ENCODE measurements at regions of chr6 and their contacts with region 1.

Region 1: DNA sequence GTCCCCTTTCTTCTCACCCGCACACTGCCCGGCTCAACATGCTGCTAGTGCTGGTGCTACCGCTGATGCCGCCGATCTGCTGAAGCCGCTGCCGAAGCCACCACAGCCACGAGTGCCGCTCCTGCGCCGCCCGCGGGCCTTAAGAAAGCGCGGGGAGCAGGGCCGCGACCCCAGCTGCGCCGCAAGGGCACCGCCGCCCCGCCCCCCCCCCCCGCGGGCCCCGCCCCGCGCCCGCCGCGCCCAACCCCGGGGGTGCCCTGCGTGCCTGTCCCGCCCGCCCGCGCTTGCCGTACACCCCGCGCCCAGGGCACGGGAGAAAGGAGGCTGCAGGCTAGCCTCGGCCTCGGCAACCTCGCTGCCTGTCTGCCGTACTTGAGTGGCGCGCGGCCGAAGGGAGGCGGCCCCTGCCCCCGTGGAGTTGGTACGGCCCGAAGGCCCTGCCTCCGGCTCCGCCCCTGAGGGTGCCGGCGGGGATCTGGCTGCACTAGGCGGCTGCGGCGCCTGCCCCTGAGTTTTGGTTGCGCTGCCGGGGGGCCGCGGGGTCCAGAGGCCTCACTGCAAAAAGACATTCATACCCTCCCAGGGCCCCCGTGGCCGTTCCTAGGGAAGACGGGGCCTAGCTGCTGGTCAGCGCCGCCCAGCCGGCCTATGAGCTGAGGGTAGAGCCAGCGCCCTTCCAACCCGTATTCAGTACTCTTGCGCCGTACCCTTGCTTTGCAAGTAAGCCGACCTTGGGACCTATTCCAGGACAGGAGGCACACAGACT is at the start of gene SOD2:
- DNase-seq: peak; percentile 49 to 75
- H3K4me3 ChIP-seq: peak within 1 kb of the TSS; percentile 97
- H3K27ac ChIP-seq: peak within 1 kb of the TSS; percentile 58
- H3K4me1 ChIP-seq: peaks cover 23% of the 10 kb centered on the region
- H3K27me3 ChIP-seq: no peaks in the 10 kb centered on the region
- CTCF ChIP-seq: no peak
- total RNA-seq, gene SOD2: 49.6 and 63.3 TPM in 2 replicates

Region 2: DNA sequence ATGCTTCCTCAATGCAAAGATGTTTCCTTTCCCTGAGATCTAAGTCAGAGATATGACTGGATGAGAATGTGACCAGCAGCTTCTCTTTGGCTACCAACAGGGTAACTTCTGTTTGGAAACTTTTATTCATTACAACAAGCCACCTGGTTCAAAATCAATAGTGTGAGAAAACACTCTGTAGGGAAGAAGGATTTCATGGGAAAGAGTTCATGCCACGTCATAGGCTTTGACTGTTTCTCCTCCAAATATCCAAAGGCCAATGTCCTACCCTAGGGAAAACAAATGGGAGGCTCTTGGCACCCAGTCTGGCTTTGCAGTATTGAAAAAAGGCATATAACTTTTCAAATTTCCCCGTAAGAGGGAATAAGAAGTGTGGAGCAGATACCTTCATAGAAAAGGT is 278.6 kb before region 1 on chr6:
- CTCF ChIA-PET with region 1: no interaction called
- POLR2A ChIA-PET with region 1: no interaction called
- intact Hi-C with region 1: no loop called
- DNase-seq: no peak
- H3K4me3 ChIP-seq: no peak overlapping the region
- H3K27ac ChIP-seq: no peak overlapping the region
- H3K4me1 ChIP-seq: no peaks in the 10 kb centered on the region
- H3K27me3 ChIP-seq: 0 out of 2 replicates have a peak, but pooled peaks cover 4% of the 10 kb centered on the region
- CTCF ChIP-seq: no peak

Region 3: GRCh38 chr6:159540883-159541282 is 152.4 kb before region 1 on chr6:
- CTCF ChIA-PET with region 1: no interaction called
- POLR2A ChIA-PET with region 1: no interaction called
- intact Hi-C with region 1: no loop called
- DNase-seq: no peak
- H3K4me3 ChIP-seq: no peak overlapping the region
- H3K27ac ChIP-seq: no peak overlapping the region
- H3K4me1 ChIP-seq: no peaks in the 10 kb centered on the region
- H3K27me3 ChIP-seq: peaks cover 18% of the 10 kb centered on the region; the same call in 1 of the 2 replicates
- CTCF ChIP-seq: no peak

Region 4: DNA sequence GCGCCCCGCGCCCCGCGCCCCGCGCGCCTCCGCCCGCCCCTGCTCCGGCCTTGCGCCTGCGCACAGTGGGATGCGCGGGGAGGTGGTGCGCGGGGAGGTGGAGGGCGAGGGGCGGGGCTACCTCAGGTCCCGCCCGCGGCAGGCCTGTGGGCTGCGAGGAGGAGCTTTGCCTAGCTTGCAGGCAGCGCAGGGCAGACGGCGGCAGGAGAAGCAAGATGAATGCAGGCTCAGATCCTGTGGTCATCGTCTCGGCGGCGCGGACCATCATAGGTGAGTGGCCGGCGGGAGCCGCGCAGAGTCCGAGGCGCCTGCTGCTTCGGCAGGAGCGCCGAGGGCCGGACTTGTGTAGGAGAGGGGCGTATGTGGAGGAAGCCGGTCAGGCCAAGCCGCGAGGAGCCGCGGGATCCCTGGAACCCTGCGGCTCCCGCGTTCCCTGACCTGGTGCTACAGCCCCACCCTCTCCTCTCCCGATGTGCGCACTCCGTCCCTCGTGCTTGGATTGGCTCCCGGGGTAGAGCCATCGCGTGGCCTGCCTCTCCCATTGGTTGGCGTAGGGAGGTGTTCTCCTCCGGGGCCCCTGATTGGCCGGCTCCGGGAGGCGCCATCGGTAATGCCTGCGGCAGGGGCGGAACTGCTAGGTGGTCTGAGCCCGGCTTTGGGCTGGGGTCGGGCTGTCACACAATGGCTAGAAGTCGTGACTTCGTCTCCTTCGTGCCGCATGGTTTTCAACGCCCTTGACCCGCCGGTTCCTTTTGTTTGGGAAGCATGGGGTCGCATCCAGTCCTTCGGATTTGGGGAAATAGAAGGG is 68.8 kb after region 1 on chr6 and contains the start of gene ACAT2:
- CTCF ChIA-PET with region 1: no interaction called
- POLR2A ChIA-PET with region 1: no interaction called
- intact Hi-C with region 1: loop called (anchors 1 kb)
- DNase-seq: peak; percentile 87 to 89
- H3K4me3 ChIP-seq: peak within 1 kb of the TSS; percentile 98
- H3K27ac ChIP-seq: peak within 1 kb of the TSS; percentile 79
- H3K4me1 ChIP-seq: peaks cover 14% of the 10 kb centered on the region
- H3K27me3 ChIP-seq: no peaks in the 10 kb centered on the region
- CTCF ChIP-seq: no peak
- total RNA-seq, gene ACAT2: 48.5 and 71.0 TPM in 2 replicates

Region 5: DNA sequence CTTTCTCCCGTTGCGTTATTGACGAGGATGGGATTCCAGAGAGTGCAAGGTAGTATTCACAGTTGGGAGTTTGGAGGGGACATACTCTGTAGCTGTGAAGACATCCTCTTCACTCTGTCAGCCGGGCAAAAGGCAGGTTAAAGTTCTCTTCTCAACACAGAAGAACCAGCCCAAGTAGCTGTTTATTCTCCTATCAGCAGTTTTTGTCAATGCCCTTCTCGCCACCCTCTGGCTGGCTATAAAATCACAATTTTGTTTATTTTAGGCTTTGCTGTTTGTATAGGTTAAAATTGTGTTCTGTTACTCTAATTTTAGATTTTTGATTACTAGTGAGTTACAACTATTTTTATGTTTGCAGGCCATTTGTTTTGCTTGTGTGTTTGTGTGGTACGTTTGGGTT is 159.6 kb after region 1 on chr6:
- CTCF ChIA-PET with region 1: interaction called, 3 read pairs
- POLR2A ChIA-PET with region 1: no interaction called
- intact Hi-C with region 1: loop called (anchors 2 kb)
- DNase-seq: no peak
- H3K4me3 ChIP-seq: no peak overlapping the region
- H3K27ac ChIP-seq: no peak overlapping the region
- H3K4me1 ChIP-seq: no peaks in the 10 kb centered on the region
- H3K27me3 ChIP-seq: peaks cover 2% of the 10 kb centered on the region; the same call in 1 of the 2 replicates
- CTCF ChIP-seq: peak; percentile 46

Region 6: GRCh38 chr6:159959165-159959975 is 266.1 kb after region 1 on chr6:
- CTCF ChIA-PET with region 1: no interaction called
- POLR2A ChIA-PET with region 1: no interaction called
- intact Hi-C with region 1: no loop called
- DNase-seq: no peak
- H3K4me3 ChIP-seq: no peak overlapping the region
- H3K27ac ChIP-seq: no peak overlapping the region
- H3K4me1 ChIP-seq: no peaks in the 10 kb centered on the region
- H3K27me3 ChIP-seq: no peaks in the 10 kb centered on the region
- CTCF ChIP-seq: no peak

Region 7: DNA sequence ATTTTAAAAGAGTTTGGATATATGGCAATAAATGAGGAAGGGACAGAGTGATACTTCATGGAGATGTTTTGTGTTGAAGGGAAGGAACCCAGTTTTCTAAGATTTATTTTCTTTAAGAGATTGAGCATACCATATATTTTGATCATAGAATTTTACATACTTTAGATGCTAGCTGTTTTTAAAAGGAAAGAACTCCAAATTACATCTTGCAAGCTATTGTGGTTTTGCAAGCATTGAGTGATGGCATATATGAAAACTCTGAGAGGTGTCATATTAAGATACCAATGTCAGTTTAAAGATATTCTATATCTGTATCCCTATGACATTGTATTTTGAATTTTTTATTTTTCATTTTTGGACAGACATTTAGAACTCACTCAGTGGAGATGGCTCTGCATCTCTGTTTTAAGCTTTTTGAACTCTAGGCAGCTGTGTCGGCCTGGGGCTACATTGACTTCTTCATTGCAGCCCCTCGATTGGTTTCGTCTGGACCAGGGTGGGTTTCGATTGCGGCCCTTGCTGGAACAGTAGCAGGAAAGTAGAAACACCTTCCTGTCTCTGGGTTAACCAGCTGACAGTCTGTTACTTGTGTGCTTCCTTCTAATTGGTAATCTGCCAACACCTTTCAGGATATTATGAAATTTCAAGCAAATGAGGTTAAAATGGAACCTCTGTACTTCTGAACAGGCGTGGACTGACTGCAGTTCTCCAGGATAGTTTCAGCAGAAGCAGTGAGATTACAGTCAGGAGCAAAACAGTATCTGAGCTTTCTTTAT is 289.6 kb after region 1 on chr6:
- CTCF ChIA-PET with region 1: no interaction called
- POLR2A ChIA-PET with region 1: interaction called, 10 read pairs
- intact Hi-C with region 1: no loop called
- DNase-seq: no peak
- H3K4me3 ChIP-seq: no peak overlapping the region
- H3K27ac ChIP-seq: no peak overlapping the region
- H3K4me1 ChIP-seq: peaks cover 23% of the 10 kb centered on the region
- H3K27me3 ChIP-seq: no peaks in the 10 kb centered on the region
- CTCF ChIP-seq: no peak

Measured in PC-9 (cell line).